ENCODE measurements at regions of chr6 and their contacts with region 1.

Region 1: GRCh38 chr6:139028658-139029469 is at the start of gene ABRACL:
- DNase-seq: peak; percentile 48 to 88 (median 69)
- ATAC-seq: peak; percentile 89
- H3K4me3 ChIP-seq: peak within 1 kb of the TSS; percentile 85
- H3K4me3 Mint-ChIP-seq: peak within 1 kb of the TSS; percentile 97
- H3K27ac ChIP-seq: peak within 1 kb of the TSS; percentile 84 to 90
- H3K27ac Mint-ChIP-seq: peak within 1 kb of the TSS; percentile 96
- H3K4me1 ChIP-seq: peaks cover 20% of the 10 kb centered on the region
- H3K4me1 Mint-ChIP-seq: peaks cover 35% of the 10 kb centered on the region
- H3K27me3 ChIP-seq: no peaks in the 10 kb centered on the region
- H3K27me3 Mint-ChIP-seq: no peaks in the 10 kb centered on the region
- CTCF ChIP-seq: no peak
- total RNA-seq, gene ABRACL: 36.8 to 40.6 TPM

Region 2: GRCh38 chr6:138289739-138290138 is 739.1 kb before region 1 on chr6:
- CTCF ChIA-PET with region 1: no interaction called
- POLR2A ChIA-PET with region 1: no interaction called
- intact Hi-C with region 1: no loop called
- DNase-seq: peak in 3 of 14 experiments; percentile 14 to 32 (median 18)
- ATAC-seq: no peak
- H3K4me3 ChIP-seq: no peak overlapping the region
- H3K4me3 Mint-ChIP-seq: no peak overlapping the region
- H3K27ac ChIP-seq: no peak overlapping the region
- H3K27ac Mint-ChIP-seq: no peak overlapping the region
- H3K4me1 ChIP-seq: no peaks in the 10 kb centered on the region
- H3K4me1 Mint-ChIP-seq: no peaks in the 10 kb centered on the region
- H3K27me3 ChIP-seq: no peaks in the 10 kb centered on the region
- H3K27me3 Mint-ChIP-seq: peaks cover 12% of the 10 kb centered on the region
- CTCF ChIP-seq: no peak

Region 3: DNA sequence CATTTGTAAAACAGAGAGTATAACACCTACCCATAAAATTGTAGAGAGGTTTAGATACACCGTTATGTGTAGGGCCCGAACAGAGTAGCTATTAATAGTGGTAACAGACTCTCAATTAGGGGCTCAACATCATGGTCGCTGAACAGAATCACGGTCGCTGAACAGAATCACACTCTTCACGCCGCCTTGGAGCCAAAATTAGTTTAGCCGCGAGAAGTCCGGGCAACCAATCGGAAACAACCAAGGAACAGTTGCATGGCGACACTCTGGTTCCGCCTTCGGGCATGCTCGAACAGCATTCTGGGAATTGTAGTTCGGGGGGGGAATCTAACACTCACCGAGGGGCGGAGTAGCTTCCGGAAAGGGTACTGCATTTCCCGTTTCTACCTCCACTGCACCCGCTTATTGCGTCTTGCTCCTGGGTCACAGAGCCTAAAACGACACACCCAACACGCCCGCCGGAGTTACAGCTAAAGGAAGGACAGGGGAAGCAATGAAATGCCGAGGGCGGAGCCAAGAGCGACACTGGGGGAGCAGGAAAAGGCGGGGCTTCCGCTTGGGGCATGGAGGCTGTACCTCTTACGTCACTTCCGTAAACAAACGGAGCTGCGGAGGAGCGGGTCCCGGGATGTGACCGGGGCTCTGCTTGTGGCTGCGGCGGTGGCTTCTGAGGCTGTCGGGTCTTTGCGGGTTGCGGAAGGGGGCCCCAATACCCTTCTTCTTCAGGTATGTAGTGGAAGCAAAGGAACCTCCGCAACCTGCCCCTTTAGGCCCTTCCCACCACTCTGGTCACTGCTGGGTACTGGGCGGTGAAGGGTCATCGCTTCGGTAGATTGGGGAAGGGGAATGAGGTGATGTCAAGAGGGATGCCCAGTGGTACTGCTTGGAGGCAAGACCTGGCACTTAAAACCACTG is 255.4 kb before region 1 on chr6 and contains the start of gene CCDC28A:
- CTCF ChIA-PET with region 1: no interaction called
- POLR2A ChIA-PET with region 1: no interaction called
- intact Hi-C with region 1: loop called in 1 of 2 experiments (anchors 5 kb)
- DNase-seq: peak; percentile 87 to 97 (median 92)
- ATAC-seq: peak; percentile 84
- H3K4me3 ChIP-seq: peak within 1 kb of the TSS; percentile 85
- H3K4me3 Mint-ChIP-seq: peak within 1 kb of the TSS; percentile 98
- H3K27ac ChIP-seq: peak within 1 kb of the TSS; percentile 93 to 97
- H3K27ac Mint-ChIP-seq: peak within 1 kb of the TSS; percentile 98
- H3K4me1 ChIP-seq: peaks cover 11% of the 10 kb centered on the region
- H3K4me1 Mint-ChIP-seq: peaks cover 39% of the 10 kb centered on the region
- H3K27me3 ChIP-seq: no peaks in the 10 kb centered on the region
- H3K27me3 Mint-ChIP-seq: no peaks in the 10 kb centered on the region
- CTCF ChIP-seq: no peak
- total RNA-seq, gene CCDC28A: 36.9 to 37.2 TPM

Region 4: DNA sequence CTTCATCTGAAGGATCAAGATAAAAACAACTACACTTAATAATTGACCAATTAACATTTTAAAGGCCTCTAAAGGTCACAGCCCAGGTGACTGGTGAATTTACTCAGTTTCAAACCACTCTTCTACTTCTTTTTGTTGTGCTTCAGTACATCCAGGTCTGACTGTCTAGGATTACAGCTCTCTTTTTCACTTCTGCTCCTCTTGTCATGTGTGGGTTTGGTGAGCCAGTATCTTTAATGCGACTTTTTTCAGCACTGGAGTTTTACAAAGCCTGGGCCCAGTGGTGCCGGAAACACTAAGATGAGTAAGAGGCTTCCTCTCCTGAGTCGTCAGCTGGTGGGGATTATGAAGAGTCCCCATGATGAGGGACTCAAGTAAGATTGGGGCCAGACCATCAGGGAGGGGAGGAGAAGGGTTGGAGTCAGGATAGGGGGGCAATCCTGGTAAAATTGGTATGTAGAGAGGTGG is 133.0 kb after region 1 on chr6:
- CTCF ChIA-PET with region 1: no interaction called
- POLR2A ChIA-PET with region 1: interaction called, 4 read pairs
- intact Hi-C with region 1: loop called in 1 of 2 experiments (anchors 5 kb)
- DNase-seq: peak in 13 of 14 experiments; percentile 46 to 84 (median 66)
- ATAC-seq: peak; percentile 55
- H3K4me3 ChIP-seq: peak overlapping the region; percentile 11
- H3K4me3 Mint-ChIP-seq: peak overlapping the region; percentile 76
- H3K27ac ChIP-seq: peak overlapping the region; percentile 32 to 70
- H3K27ac Mint-ChIP-seq: peak overlapping the region; percentile 84
- H3K4me1 ChIP-seq: peaks cover 94% of the 10 kb centered on the region
- H3K4me1 Mint-ChIP-seq: peaks cover 88% of the 10 kb centered on the region
- H3K27me3 ChIP-seq: no peaks in the 10 kb centered on the region
- H3K27me3 Mint-ChIP-seq: no peaks in the 10 kb centered on the region
- CTCF ChIP-seq: no peak

Region 5: GRCh38 chr6:139173172-139173571 is 144.3 kb after region 1 on chr6:
- CTCF ChIA-PET with region 1: no interaction called
- POLR2A ChIA-PET with region 1: interaction called, 4 read pairs
- intact Hi-C with region 1: loop called in 1 of 2 experiments (anchors 5 kb)
- DNase-seq: peak in 4 of 14 experiments; percentile 42 to 70 (median 54)
- ATAC-seq: peak; percentile 71
- H3K4me3 ChIP-seq: no peak overlapping the region
- H3K4me3 Mint-ChIP-seq: peak overlapping the region; percentile 40
- H3K27ac ChIP-seq: peak overlapping the region; percentile 31 to 49
- H3K27ac Mint-ChIP-seq: peak overlapping the region; percentile 48
- H3K4me1 ChIP-seq: peaks cover 69% of the 10 kb centered on the region
- H3K4me1 Mint-ChIP-seq: peaks cover 95% of the 10 kb centered on the region
- H3K27me3 ChIP-seq: no peaks in the 10 kb centered on the region
- H3K27me3 Mint-ChIP-seq: no peaks in the 10 kb centered on the region
- CTCF ChIP-seq: peak; percentile 39